ENCODE measurements at regions of chr7 and their contacts with region 1.

Region 1: DNA sequence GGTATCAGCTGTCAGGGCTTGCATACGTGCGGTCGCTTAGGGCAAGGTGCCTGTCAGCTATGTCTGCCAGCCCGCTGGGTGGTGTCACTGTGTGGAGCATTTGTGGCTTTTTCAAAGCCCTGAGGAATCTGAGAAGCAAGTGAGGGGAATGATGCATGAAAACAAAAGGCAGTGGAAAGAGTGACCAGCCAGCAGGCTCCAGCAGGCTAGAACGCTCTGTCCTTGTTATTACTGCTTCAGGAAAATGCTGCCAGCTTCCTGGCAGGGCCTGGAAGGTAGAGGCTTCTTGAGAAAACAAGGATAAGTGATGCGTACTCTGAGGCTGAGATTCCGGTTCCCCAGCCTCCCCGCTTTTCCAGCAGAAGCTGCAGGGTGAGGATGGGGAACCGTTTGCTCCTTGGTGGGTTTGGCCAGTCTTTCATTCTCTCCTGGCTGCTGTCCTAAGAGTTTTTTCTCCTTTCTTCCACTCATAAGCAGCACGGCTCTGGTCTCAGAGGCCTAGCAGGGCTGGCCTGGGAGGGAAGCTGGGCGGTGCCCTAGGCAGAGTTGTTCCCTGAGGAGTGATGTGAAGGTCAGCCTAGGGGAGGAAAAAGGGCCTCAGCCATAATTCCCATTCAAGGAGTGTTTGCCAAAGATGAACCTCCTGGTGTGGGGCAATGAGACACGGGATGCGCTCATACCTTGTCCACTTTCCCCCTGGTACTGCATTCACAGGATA is 42.8 kb upstream of the MKLN1 start:
- DNase-seq: peak; percentile 74 to 82
- ATAC-seq: peak; percentile 91 to 96 (median 94)
- H3K4me3 ChIP-seq: no peak overlapping the region
- H3K27ac ChIP-seq: peak overlapping the region; percentile 87
- H3K4me1 ChIP-seq: peaks cover 12% of the 10 kb centered on the region
- H3K27me3 ChIP-seq: no peaks in the 10 kb centered on the region
- CTCF ChIP-seq: no peak

Region 2: DNA sequence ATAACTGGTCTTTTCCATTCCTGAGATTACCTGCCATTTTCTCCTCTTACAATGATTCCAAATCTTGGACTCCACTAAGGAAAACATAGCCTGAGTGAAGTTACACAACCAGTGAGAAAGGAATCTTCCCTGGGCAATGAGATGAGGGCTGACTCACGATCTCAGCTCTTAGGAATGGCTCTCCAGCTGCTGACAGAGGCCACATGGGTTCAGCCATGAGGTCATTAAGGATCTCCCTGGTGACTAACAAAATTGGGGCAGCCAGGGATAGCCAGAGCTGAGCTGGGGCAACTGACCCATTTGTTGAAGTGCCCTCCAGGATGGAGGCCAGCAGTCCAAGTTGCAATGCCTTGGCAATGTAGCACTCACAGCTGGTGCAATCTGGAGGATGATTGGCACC is 35.9 kb before region 1 on chr7:
- intact Hi-C with region 1: loop called in 1 of 2 experiments (anchors 5 kb)
- DNase-seq: peak; percentile 81 to 91
- ATAC-seq: peak; percentile 99 to 100 (median 100)
- H3K4me3 ChIP-seq: no peak overlapping the region
- H3K27ac ChIP-seq: peak overlapping the region; percentile 71
- H3K4me1 ChIP-seq: peaks cover 14% of the 10 kb centered on the region
- H3K27me3 ChIP-seq: no peaks in the 10 kb centered on the region
- CTCF ChIP-seq: no peak

Region 3: GRCh38 chr7:131699323-131699722 is 414.5 kb after region 1 on chr7:
- intact Hi-C with region 1: no loop called
- DNase-seq: no peak
- ATAC-seq: no peak
- H3K4me3 ChIP-seq: no peak overlapping the region
- H3K27ac ChIP-seq: no peak overlapping the region
- H3K4me1 ChIP-seq: no peaks in the 10 kb centered on the region
- H3K27me3 ChIP-seq: peaks cover 0 to 3% (median 0%) of the 10 kb centered on the region in 3 donors
- CTCF ChIP-seq: no peak

Measured in psoas muscle (tissue), 8 donors.